Ovary (tissue), 10 donors: ENCODE measurements at regions of chr1 and their contacts with region 1.

Region 1: GRCh38 chr1:209692745-209693504 is 11.7 kb upstream of the HSD11B1 start:
- DNase-seq: peak; percentile 79 to 91 (median 82)
- H3K4me3 ChIP-seq: no peak overlapping the region
- H3K27ac ChIP-seq: no peak overlapping the region
- H3K4me1 ChIP-seq: peaks cover 8% of the 10 kb centered on the region
- H3K27me3 ChIP-seq: no peaks in the 10 kb centered on the region
- CTCF ChIP-seq: peak; percentile 82 to 86 (median 84)
- EP300 ChIP-seq: no peak
- POLR2A ChIP-seq: no peak

Region 2: DNA sequence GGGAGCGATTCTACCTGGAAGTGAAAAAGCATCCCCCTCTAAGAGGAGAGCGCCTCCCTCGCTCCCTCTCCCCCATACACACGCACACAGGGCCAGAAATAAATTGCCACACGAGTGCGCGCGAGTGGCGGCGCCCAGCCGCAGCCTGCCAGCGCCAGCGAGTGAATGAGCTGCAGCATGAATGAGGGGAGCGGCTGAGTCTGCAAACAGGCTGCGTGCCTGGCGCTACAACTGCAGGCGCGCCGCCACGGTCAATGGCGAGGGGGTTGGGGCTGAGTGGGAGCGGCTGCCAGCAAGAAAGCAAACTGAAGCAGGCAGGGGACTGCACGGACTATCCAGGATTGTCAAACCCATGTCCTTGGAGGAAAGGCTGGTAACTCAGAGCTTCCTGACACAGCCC is 107.3 kb before region 1 on chr1:
- intact Hi-C with region 1: loop called in 2 of 4 experiments (anchors 5 kb)
- DNase-seq: peak; percentile 45 to 75 (median 68)
- H3K4me3 ChIP-seq: no peak overlapping the region
- H3K27ac ChIP-seq: no peak overlapping the region
- H3K4me1 ChIP-seq: peaks cover 8% of the 10 kb centered on the region
- H3K27me3 ChIP-seq: no peaks in the 10 kb centered on the region
- CTCF ChIP-seq: no peak
- EP300 ChIP-seq: no peak
- POLR2A ChIP-seq: no peak

Region 3: GRCh38 chr1:209627732-209628196 is 65.2 kb before region 1 on chr1:
- intact Hi-C with region 1: loop called in 3 of 4 experiments (anchors 5 to 10 kb)
- DNase-seq: peak; percentile 76 to 90 (median 86)
- H3K4me3 ChIP-seq: no peak overlapping the region
- H3K27ac ChIP-seq: no peak overlapping the region
- H3K4me1 ChIP-seq: peaks cover 8% of the 10 kb centered on the region
- H3K27me3 ChIP-seq: no peaks in the 10 kb centered on the region
- CTCF ChIP-seq: peak; percentile 82 to 92 (median 87)
- EP300 ChIP-seq: no peak
- POLR2A ChIP-seq: no peak

Region 4: DNA sequence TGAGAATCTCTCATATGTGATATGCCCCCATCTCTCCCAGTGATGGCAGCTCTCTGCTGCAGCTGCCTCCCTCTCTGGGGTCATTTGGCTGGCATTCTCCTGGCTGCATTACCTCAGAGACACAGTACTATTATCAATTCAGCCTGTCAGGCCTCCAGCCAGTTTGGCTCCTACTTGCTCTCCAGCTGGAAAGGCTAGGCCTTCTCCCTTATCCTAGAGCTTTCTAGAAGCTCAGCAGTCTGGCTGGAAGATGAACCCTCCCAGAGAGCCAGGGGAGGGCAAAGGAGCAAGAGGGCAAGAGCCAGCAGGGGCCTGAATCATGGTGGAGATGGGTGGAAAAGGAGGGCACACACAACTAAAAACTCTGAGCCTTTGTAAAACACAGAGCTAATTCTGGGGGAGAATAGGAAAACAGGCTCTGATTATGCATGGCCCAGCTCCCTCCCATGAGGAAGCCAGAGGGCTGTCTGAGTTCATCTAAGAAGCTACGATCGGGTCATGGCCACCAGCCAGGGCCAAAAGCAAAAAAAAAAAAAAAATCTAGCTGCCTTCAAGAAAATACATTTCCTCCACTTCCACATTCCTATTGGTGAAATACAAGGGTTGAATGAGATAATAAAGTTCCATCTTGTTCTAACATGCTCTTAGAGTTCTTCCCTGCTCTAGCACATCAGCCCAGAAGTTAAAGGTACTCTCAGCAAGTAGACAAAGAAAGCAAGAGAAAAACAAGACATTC is 49.5 kb before region 1 on chr1:
- intact Hi-C with region 1: loop called in 3 of 4 experiments (anchors 5 to 10 kb)
- DNase-seq: peak; percentile 61 to 83 (median 71)
- H3K4me3 ChIP-seq: no peak overlapping the region
- H3K27ac ChIP-seq: peak overlapping the region in 1 of 2 donors; percentile 91
- H3K4me1 ChIP-seq: peaks cover 36% of the 10 kb centered on the region
- H3K27me3 ChIP-seq: no peaks in the 10 kb centered on the region
- CTCF ChIP-seq: no peak
- EP300 ChIP-seq: no peak
- POLR2A ChIP-seq: no peak

Region 5: DNA sequence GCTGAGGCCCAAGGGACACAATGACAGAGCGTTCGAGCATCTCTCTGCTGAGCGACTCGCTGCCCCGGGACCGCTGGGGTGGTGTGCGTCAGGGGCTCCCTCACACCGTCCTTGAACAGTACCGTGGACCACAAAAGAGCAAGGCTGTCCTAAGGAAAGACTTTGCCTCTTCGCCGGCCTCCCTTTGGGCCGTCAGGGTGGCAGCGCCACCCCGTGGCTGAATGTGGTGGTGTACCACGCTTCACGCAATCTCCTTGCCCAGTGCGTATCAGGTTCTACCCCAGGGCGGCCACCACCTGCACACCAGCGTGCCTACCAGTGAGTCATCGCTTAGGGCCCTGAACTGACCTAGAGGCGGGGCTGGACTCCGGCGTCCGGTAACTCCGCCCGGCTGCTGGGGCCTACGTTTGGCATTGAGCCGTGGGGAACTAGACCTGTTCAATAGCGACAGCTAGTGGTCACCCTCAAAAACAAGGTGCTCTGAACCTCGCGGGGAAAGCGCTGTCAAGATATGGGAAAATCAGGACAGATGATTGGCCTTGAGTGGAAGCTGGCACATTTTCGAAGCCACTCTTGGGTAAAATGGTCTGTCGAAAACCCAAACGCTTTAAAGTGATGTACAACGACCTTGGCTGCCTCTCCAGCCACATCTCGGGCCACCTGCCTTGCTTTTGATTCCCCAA is 54.8 kb after region 1 on chr1:
- intact Hi-C with region 1: loop called in 3 of 4 experiments (anchors 5 to 10 kb)
- DNase-seq: peak; percentile 93 to 96 (median 95)
- H3K4me3 ChIP-seq: no peak overlapping the region
- H3K27ac ChIP-seq: peak overlapping the region in 1 of 2 donors; percentile 31
- H3K4me1 ChIP-seq: peaks cover 8% of the 10 kb centered on the region
- H3K27me3 ChIP-seq: no peaks in the 10 kb centered on the region
- CTCF ChIP-seq: peak; percentile 81 to 100 (median 99)
- EP300 ChIP-seq: no peak
- POLR2A ChIP-seq: peak; percentile 3

Region 6: GRCh38 chr1:209860293-209860881 is 167.5 kb after region 1 on chr1:
- intact Hi-C with region 1: no loop called
- DNase-seq: peak; percentile 71 to 83 (median 76)
- H3K4me3 ChIP-seq: no peak overlapping the region
- H3K27ac ChIP-seq: no peak overlapping the region
- H3K4me1 ChIP-seq: no peaks in the 10 kb centered on the region
- H3K27me3 ChIP-seq: no peaks in the 10 kb centered on the region
- CTCF ChIP-seq: peak; percentile 47 to 67 (median 54)
- EP300 ChIP-seq: no peak
- POLR2A ChIP-seq: no peak